ENCODE measurements at regions of chr1 and their contacts with region 1.

Region 1: DNA sequence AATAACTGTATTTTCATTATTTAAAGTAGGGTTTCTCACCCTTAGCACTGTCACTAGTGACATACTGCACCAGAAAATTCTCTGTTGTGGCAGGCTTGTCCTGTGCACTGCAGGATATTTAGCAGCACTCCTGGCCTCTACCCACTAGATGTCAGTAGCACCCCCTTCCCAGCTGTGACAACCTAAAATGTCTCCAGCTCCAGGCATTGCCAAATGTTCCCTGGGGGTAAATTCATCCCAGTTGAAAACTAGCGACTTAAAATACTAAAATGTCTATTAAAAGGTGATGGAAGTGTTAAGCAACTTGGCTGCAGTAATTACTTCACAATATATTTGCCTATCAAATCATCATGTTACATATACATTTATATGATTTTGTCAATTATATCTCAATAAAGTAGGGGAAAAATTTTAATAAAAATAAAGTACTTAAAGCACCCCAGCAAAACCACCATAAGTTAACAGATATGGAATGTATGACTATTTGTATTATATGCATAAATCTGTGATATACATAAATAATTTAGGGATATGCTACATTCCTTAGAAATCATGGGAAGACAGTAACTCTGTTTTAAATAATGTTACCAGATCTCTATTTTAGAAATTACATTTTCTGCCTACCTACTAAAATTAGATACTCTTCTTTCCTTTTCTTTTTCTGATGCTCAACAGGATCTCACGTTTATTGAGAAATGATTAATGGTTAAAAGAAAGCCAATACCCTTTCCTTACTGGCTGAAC is 74.6 kb downstream of the ARID4B start:
- DNase-seq: peak; percentile 51
- ATAC-seq: peak; percentile 90 to 93

Region 2: DNA sequence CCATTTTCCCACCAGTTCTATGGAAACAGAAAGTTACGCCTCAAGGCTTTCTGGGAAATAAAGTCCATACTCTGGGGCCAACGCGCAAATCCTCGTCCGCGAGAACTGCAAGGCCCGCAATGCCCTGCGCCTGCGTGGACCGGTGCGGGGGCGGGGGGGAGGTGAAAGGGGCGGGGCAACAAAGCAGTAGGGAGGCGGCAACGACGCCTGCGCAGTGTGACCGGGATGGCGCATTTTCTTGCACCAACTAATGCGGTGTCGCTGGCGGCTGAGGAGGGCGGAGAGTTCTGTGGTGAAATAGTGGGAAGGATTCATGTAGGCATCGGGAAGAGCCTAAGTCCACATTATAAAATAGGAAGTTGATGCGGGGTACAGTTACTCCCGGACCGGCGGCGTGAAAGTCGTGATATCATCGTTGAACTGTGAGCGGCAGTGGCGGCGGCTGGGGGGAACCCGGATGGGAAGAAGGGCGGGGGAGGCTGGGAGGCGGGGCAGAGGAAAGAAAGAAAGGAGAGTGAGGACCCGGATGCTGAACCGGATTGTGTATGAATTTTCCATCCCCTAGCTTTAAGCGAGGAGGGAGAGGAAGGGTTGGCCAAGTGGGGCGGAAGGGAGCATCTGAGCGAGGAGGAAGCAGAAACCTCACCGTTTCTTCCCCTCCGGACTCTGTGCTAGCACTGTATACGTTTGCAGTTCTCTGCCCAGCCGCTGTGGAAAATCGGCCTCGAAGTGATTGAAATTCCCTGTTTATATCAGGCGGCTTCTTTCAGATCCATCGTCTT is 75.2 kb after region 1 on chr1 and contains the start of gene GGPS1:
- intact Hi-C with region 1: loop called in 1 of 2 experiments (anchors 5 kb)
- DNase-seq: peak; percentile 97
- ATAC-seq: peak; percentile 92 to 93
- total RNA-seq, gene GGPS1: 25.1 to 28.4 TPM

Region 3: GRCh38 chr1:235415008-235415904 is 161.9 kb after region 1 on chr1:
- intact Hi-C with region 1: loop called (anchors 2 to 5 kb)
- DNase-seq: peak; percentile 58
- ATAC-seq: peak; percentile 64 to 75

Measured in left cardiac atrium (tissue), 4 donors.